ENCODE measurements at regions of chr11 and their contacts with region 1.

Region 1: GRCh38 chr11:100682247-100682969 is 4.7 kb upstream of the ARHGAP42 start:
- DNase-seq: peak in 1 of 9 experiments; percentile 2
- ATAC-seq: no peak
- H3K4me3 ChIP-seq: no peak overlapping the region
- H3K4me3 Mint-ChIP-seq: no peak overlapping the region
- H3K27ac ChIP-seq: no peak overlapping the region
- H3K27ac Mint-ChIP-seq: no peak overlapping the region
- H3K4me1 ChIP-seq: peaks cover 6% of the 10 kb centered on the region
- H3K4me1 Mint-ChIP-seq: peaks cover 14% of the 10 kb centered on the region
- H3K27me3 ChIP-seq: no peaks in the 10 kb centered on the region
- H3K27me3 Mint-ChIP-seq: peaks cover 7% of the 10 kb centered on the region
- CTCF ChIP-seq: no peak

Region 2: DNA sequence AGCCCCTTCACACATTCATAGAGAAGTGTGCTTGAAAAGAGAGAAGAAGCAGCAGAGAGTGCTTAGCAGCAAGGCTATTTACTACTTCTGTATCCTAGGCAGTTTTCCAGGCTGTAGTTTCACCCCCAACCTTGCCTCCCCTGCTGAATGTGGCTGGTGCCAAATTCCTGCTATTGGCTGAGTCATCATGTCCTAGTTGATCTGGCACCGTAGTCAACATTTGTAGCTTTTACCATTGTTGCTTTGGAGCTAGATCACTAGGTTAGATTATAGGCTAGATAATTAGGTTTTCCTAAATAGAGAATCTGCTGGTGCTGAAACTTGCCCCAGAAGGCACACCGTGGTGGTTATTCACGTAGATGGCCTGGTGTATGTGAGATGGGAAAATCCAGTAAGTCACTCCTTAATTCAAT is 37.4 kb after region 1 on chr11:
- CTCF ChIA-PET with region 1: no interaction called
- POLR2A ChIA-PET with region 1: no interaction called
- intact Hi-C with region 1: no loop called
- DNase-seq: no peak
- ATAC-seq: no peak
- H3K4me3 ChIP-seq: no peak overlapping the region
- H3K4me3 Mint-ChIP-seq: no peak overlapping the region
- H3K27ac ChIP-seq: no peak overlapping the region
- H3K27ac Mint-ChIP-seq: no peak overlapping the region
- H3K4me1 ChIP-seq: no peaks in the 10 kb centered on the region
- H3K4me1 Mint-ChIP-seq: no peaks in the 10 kb centered on the region
- H3K27me3 ChIP-seq: no peaks in the 10 kb centered on the region
- H3K27me3 Mint-ChIP-seq: no peaks in the 10 kb centered on the region
- CTCF ChIP-seq: no peak

Region 3: GRCh38 chr11:100930185-100930778 is 247.9 kb after region 1 on chr11:
- CTCF ChIA-PET with region 1: no interaction called
- POLR2A ChIA-PET with region 1: no interaction called
- intact Hi-C with region 1: loop called in 1 of 2 experiments (anchors 2 kb)
- DNase-seq: peak in 2 of 9 experiments; percentile 3 to 29
- ATAC-seq: no peak
- H3K4me3 ChIP-seq: no peak overlapping the region
- H3K4me3 Mint-ChIP-seq: no peak overlapping the region
- H3K27ac ChIP-seq: no peak overlapping the region
- H3K27ac Mint-ChIP-seq: no peak overlapping the region
- H3K4me1 ChIP-seq: no peaks in the 10 kb centered on the region
- H3K4me1 Mint-ChIP-seq: no peaks in the 10 kb centered on the region
- H3K27me3 ChIP-seq: no peaks in the 10 kb centered on the region
- H3K27me3 Mint-ChIP-seq: no peaks in the 10 kb centered on the region
- CTCF ChIP-seq: peak; percentile 43